ENCODE measurements at regions of chr1 and their contacts with region 1.

Region 1: GRCh38 chr1:185720633-185721272 is 13.4 kb upstream of the HMCN1 start:
- DNase-seq: no peak
- H3K4me3 ChIP-seq: no peak overlapping the region
- H3K27ac ChIP-seq: no peak overlapping the region
- H3K4me1 ChIP-seq: no peaks in the 10 kb centered on the region
- H3K27me3 ChIP-seq: no peaks in the 10 kb centered on the region
- CTCF ChIP-seq: peak in 2 of 3 experiments; percentile 13 to 42; a peak in 2 of 4 replicates
- EP300 ChIP-seq: no peak
- POLR2A ChIP-seq: no peak
- RAD21 ChIP-seq: peak in 1 of 2 experiments; percentile 55; a peak in 3 of 4 replicates

Region 2: DNA sequence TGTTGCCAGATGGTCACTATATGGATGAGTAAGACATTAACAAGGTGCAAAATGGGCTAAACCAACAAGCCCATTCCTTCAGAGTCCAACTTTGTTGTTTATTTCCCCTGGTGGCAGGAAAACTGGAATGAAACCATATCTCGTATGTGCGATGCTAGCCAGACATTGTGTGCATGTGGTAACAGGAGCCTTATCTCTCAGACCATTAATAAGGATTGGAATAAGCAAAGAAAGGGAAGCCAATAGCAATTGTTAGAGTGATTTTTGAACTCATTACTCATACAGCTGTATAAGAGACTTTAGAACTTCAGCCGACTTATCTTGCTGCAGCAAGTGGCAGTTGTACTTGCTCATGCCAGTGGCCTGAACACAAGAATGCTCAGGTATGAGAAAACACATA is 16.6 kb before region 1 on chr1:
- CTCF ChIA-PET with region 1: interaction called, 10 read pairs
- POLR2A ChIA-PET with region 1: no interaction called
- DNase-seq: no peak
- H3K4me3 ChIP-seq: no peak overlapping the region
- H3K27ac ChIP-seq: no peak overlapping the region
- H3K4me1 ChIP-seq: peaks cover 0 to 7% (median 3%) of the 10 kb centered on the region in 4 experiments; a peak in 4 of 7 replicates
- H3K27me3 ChIP-seq: peaks cover 0 to 7% (median 3%) of the 10 kb centered on the region in 4 experiments; a peak in 3 of 7 replicates
- CTCF ChIP-seq: no peak
- EP300 ChIP-seq: no peak
- POLR2A ChIP-seq: no peak
- RAD21 ChIP-seq: no peak

Region 3: GRCh38 chr1:185733818-185734771 is 13.3 kb after region 1 on chr1 and contains the start of gene HMCN1:
- CTCF ChIA-PET with region 1: interaction called, 40 read pairs
- POLR2A ChIA-PET with region 1: interaction called, 4 read pairs
- DNase-seq: peak; percentile 51 to 84
- H3K4me3 ChIP-seq: peak within 1 kb of the TSS; percentile 58 to 81 (median 68)
- H3K27ac ChIP-seq: no peak within 1 kb of the TSS
- H3K4me1 ChIP-seq: peaks cover 2 to 6% (median 4%) of the 10 kb centered on the region in 4 experiments; a peak in 6 of 7 replicates
- H3K27me3 ChIP-seq: no peaks in the 10 kb centered on the region; a peak in 2 of 7 replicates
- CTCF ChIP-seq: peak; percentile 45 to 56 (median 51)
- EP300 ChIP-seq: no peak
- POLR2A ChIP-seq: peak; percentile 48 to 73
- RAD21 ChIP-seq: peak; percentile 18 to 30; a peak in 2 of 4 replicates
- total RNA-seq, gene HMCN1: 14.4 and 14.6 TPM in 2 replicates

Region 4: GRCh38 chr1:185813401-185813979 is 92.7 kb after region 1 on chr1:
- CTCF ChIA-PET with region 1: interaction called, 25 read pairs
- POLR2A ChIA-PET with region 1: no interaction called
- DNase-seq: no peak
- H3K4me3 ChIP-seq: no peak overlapping the region
- H3K27ac ChIP-seq: no peak overlapping the region
- H3K4me1 ChIP-seq: peaks cover 0 to 2% (median 0%) of the 10 kb centered on the region in 4 experiments; a peak in 1 of 7 replicates
- H3K27me3 ChIP-seq: no peaks in the 10 kb centered on the region
- CTCF ChIP-seq: peak in 2 of 3 experiments; percentile 34 to 51; a peak in 2 of 4 replicates
- EP300 ChIP-seq: no peak
- POLR2A ChIP-seq: no peak
- RAD21 ChIP-seq: peak; percentile 77 to 82

Region 5: GRCh38 chr1:186212544-186213226 is 491.9 kb after region 1 on chr1:
- CTCF ChIA-PET with region 1: interaction called, 42 read pairs
- POLR2A ChIA-PET with region 1: no interaction called
- DNase-seq: peak in 1 of 2 experiments; percentile 21
- H3K4me3 ChIP-seq: no peak overlapping the region
- H3K27ac ChIP-seq: no peak overlapping the region
- H3K4me1 ChIP-seq: no peaks in the 10 kb centered on the region
- H3K27me3 ChIP-seq: no peaks in the 10 kb centered on the region
- CTCF ChIP-seq: peak in 2 of 3 experiments; percentile 86 to 92; a peak in 3 of 4 replicates
- EP300 ChIP-seq: peak in 1 of 2 experiments; percentile 6; a peak in 1 of 3 replicates
- POLR2A ChIP-seq: no peak
- RAD21 ChIP-seq: peak; percentile 99

Measured in H1 (cell line).